GM10248 (cell line): ENCODE measurements at regions of chr17 and their contacts with region 1.

Region 1: DNA sequence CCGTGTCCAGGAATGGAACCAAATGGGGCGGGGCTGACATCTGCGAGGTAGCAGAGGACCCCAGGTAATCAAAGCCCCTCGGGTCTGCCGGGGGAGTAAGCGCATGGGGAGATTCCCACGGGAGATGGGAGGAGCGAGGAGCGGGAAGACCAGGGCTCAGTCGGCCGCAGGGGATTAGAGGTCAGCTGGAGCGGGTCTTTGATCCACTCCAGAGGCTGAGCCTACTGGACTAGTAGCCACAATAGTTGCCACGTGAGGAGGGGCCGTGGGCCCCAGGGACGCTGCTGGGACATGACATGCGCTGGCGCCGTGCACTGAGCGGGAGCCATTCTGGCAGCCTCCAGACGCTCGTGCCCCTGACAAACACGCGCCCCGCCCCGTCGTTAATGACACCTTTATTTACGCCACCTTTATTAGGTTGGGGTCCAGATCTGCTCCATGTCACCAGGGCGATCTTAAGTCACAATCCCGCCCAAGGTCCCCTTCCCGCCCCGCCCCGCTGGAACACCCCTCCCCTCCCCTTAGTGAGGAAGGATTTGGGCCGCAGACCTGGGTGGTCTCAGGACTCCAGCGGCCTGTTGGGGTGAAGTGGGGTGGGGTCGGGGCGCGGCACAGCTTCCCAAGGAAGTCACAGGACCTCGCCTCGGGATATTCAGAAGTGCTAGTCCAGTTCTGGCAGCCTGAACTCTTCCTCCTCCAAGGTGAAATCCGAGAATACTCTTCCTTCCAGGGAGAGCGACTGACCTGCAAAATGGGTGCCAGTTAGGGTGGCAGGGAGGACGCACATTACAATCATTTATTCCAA is 15.0 kb downstream of the PPY start:
- DNase-seq: no peak
- CTCF ChIP-seq: no peak

Region 2: DNA sequence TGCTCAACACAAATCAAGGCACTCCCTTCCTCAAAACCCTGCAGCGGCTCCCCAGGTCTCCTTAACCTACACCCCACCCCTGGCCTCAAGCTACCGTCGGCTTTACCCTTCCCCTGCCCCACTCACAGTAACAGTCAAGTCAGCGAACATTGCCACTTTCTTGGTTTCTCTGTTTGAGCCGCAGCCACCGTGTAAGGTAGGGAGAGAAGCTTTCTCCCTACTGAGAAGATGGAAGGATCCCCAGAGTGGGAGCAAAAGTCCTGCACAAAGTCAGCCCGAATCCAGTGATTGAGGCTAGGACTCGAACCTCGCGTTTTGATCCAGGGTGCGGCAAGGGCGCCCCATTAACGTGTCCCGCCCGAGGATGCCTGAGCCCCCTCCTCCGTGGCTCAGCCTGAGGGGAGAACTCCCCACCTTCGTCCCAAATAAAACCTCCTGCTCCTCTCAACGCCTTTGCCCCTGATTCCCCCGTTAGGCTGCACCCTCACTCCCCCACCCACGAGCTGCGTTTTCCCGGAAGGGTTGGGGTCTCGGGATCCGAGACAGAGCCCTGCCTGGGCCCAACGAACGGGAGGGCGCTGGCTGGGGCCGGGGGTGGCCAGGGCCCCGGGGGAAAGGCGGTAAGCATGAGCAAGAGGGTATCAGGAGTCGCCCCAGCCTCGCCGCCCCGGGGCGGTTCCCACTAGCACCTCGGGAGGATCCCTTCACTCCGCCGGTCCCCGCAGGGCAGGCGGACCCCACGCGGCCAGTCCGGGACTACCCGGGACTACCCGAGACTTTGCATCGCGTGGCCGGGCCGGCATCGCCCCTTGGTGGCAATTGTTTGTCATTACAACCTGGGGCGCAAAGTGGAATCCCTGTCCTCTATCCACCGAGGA is 67.2 kb after region 1 on chr17:
- CTCF ChIA-PET with region 1: interaction called, 10 read pairs
- POLR2A ChIA-PET with region 1: no interaction called
- DNase-seq: peak; percentile 76
- CTCF ChIP-seq: peak; percentile 82